PC-9 (cell line): ENCODE measurements at regions of chr7 and their contacts with region 1.

Region 1: GRCh38 chr7:55878691-55879090 is 8.6 kb upstream of the ZNF713 start:
- DNase-seq: no peak
- H3K4me3 ChIP-seq: no peak overlapping the region
- H3K27ac ChIP-seq: no peak overlapping the region
- H3K4me1 ChIP-seq: no peaks in the 10 kb centered on the region
- H3K27me3 ChIP-seq: no peaks in the 10 kb centered on the region
- CTCF ChIP-seq: no peak

Region 2: GRCh38 chr7:55996856-55997500 is 118.3 kb after region 1 on chr7:
- CTCF ChIA-PET with region 1: no interaction called
- POLR2A ChIA-PET with region 1: interaction called, 10 read pairs
- intact Hi-C with region 1: no loop called
- DNase-seq: no peak
- H3K4me3 ChIP-seq: no peak overlapping the region
- H3K27ac ChIP-seq: no peak overlapping the region
- H3K4me1 ChIP-seq: no peaks in the 10 kb centered on the region
- H3K27me3 ChIP-seq: no peaks in the 10 kb centered on the region
- CTCF ChIP-seq: no peak

Region 3: DNA sequence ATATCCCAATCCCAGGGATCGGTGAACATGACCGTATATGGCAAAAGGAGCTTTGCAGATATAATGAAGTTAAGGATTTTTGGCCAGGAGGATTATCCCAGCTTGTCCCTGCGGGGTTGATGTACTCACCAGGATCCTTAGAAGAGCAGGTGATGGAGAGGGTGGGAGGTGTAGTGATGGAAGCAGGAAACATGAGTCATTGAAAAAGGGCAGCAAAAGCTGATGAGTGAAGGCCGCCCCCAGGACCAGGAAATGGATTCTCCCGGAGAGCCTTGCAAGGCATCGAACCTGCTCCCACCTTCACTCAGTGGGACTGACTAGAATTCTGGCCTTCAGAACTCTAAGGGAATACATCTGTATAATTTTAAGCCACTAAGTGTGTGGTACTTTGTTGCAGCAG is 242.7 kb after region 1 on chr7:
- CTCF ChIA-PET with region 1: no interaction called
- POLR2A ChIA-PET with region 1: no interaction called
- intact Hi-C with region 1: no loop called
- DNase-seq: no peak
- H3K4me3 ChIP-seq: no peak overlapping the region
- H3K27ac ChIP-seq: no peak overlapping the region
- H3K4me1 ChIP-seq: no peaks in the 10 kb centered on the region
- H3K27me3 ChIP-seq: no peaks in the 10 kb centered on the region
- CTCF ChIP-seq: no peak